CD4-positive, alpha-beta T cell (primary cell): ENCODE measurements at regions of chr16 and their contacts with region 1.

Region 1: DNA sequence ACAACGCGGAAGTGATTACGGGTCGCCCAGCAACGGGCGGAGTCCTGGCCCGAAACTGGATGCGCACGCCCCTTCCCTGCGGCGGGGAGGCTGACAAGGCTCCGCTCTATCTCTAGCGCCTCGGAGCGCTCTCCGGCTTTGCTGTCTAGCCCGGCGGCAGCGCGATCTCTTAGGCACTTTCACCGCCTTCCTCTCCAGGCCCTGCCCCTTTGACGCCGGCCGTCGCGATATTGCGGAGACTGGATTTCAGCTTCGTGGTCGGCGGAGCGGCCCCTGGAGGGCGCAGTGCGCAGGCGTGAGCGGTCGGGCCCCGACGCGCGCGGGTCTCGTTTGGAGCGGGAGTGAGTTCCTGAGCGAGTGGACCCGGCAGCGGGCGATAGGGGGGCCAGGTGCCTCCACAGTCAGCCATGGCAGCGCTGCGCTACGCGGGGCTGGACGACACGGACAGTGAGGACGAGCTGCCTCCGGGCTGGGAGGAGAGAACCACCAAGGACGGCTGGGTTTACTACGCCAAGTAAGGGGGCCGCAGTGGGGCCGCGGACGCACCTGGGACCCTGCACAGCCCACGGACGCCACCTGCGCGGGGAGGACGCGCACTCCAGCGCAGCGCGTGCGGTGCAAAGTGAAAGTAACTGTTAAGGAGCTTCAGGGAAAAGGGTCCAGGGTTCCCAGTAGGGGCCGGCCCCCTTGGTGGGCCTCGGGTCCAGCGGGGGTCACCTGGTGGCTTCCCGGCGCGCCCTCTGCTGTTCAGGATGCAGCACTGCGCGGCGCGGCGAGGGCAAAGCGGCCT is at the start of gene WWOX:
- DNase-seq: peak; percentile 91 to 99 (median 94)
- ATAC-seq: peak; percentile 96
- H3K4me3 ChIP-seq: peak within 1 kb of the TSS; percentile 91
- H3K4me3 Mint-ChIP-seq: peak within 1 kb of the TSS; percentile 94
- H3K27ac ChIP-seq: peak within 1 kb of the TSS; percentile 85 to 90
- H3K27ac Mint-ChIP-seq: peak within 1 kb of the TSS; percentile 83
- H3K4me1 ChIP-seq: peaks cover 29% of the 10 kb centered on the region
- H3K4me1 Mint-ChIP-seq: peaks cover 33% of the 10 kb centered on the region
- H3K27me3 ChIP-seq: no peaks in the 10 kb centered on the region
- H3K27me3 Mint-ChIP-seq: no peaks in the 10 kb centered on the region
- CTCF ChIP-seq: peak; percentile 98
- total RNA-seq, gene WWOX: 19.3 to 21.7 TPM

Region 2: DNA sequence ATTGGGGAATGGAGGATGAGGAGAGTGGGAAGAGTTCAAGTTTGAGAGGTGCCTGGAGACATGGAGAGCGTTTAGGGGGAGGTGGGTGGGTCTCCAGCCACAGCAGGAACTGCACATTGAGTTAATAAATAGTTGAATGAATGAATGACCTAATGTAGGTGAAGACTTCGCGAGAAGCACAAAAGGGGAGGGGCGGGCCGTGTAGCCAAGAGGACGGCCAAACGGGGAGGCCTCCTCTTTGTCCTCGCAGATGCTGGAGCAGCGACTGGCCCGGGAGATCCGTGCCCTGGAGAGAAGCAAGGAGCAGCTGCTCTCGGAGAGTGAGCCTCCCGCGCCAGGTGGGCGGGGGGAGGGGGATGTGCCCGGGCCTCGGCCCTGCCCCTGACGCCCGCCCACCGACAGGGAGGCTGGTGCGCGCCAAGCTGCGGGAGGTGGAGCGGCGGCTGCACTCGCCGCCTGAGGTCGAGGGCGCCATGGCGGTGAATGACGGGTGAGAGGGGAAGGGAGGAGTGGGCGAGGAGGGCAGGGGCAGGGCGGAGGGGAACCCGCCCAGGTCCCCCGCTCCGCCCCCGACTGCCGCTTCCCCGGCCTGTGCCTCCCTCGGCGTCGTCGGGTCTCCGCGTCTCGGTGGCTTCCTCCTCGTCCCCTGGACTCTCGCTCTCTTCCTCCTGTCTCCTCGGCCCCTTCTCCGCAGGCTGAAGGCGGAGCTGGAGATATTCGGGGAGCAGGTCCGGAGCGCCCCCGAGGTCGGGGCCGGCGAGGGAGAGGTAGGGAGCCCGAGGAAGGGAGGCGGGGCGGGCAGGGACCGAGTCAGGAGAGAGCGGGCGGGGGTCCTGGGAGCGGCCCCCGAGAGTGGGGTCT is 887.5 kb before region 1 on chr16:
- CTCF ChIA-PET with region 1: no interaction called
- POLR2A ChIA-PET with region 1: no interaction called
- intact Hi-C with region 1: loop called (anchors 10 kb)
- DNase-seq: peak; percentile 48 to 90 (median 72)
- ATAC-seq: peak; percentile 86
- H3K4me3 ChIP-seq: peak overlapping the region; percentile 85
- H3K4me3 Mint-ChIP-seq: peak overlapping the region; percentile 96
- H3K27ac ChIP-seq: peak overlapping the region; percentile 58 to 74
- H3K27ac Mint-ChIP-seq: peak overlapping the region; percentile 72
- H3K4me1 ChIP-seq: peaks cover 17% of the 10 kb centered on the region
- H3K4me1 Mint-ChIP-seq: peaks cover 16% of the 10 kb centered on the region
- H3K27me3 ChIP-seq: no peaks in the 10 kb centered on the region
- H3K27me3 Mint-ChIP-seq: no peaks in the 10 kb centered on the region
- CTCF ChIP-seq: no peak

Region 3: GRCh38 chr16:77675464-77676324 is 423.9 kb before region 1 on chr16:
- CTCF ChIA-PET with region 1: no interaction called
- POLR2A ChIA-PET with region 1: no interaction called
- intact Hi-C with region 1: loop called (anchors 1 kb)
- DNase-seq: peak; percentile 20 to 77 (median 46)
- ATAC-seq: peak; percentile 68
- H3K4me3 ChIP-seq: no peak overlapping the region
- H3K4me3 Mint-ChIP-seq: no peak overlapping the region
- H3K27ac ChIP-seq: no peak overlapping the region
- H3K27ac Mint-ChIP-seq: no peak overlapping the region
- H3K4me1 ChIP-seq: no peaks in the 10 kb centered on the region
- H3K4me1 Mint-ChIP-seq: no peaks in the 10 kb centered on the region
- H3K27me3 ChIP-seq: peaks cover 0 to 10% of the 10 kb centered on the region in 2 experiments
- H3K27me3 Mint-ChIP-seq: peaks cover 10% of the 10 kb centered on the region
- CTCF ChIP-seq: peak; percentile 92

Region 4: DNA sequence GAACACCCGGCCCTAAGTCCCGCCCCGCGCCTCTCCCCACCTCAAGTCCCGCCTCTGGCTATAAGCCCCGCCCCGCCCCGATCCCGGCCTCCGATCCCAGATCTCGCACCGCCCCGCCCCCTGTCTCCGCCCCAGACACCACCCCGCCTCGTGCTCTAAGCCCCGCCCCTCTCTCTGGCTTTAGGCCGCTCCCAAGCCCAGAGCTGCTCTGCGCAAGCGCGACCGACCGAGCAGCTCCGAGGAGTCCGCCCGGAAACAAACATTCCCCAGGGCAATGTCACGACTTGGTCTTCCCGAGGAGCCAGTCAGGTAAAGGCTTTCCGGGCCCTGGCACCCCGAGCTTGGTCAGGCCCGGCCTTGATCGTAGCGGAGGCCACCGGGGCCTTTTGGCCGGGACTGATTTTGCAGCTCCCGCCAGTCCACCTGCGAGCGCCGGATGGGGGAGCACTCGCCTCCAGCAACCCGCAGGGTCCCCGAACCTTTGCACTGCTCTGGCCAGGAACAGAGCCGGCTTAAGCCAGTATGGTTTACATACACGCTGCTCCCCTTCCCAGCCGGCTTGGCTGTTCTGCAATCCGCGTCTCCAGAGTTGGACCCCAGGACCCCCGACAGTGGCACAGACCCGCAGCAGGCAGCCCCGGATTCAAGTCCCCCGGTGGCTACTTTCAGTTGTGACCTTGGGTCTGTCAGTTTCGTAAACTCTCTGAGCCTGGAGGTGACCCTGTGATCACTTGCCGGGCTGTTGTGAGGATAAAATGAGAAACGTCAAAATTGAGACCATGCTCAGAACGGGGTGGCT is 377.1 kb before region 1 on chr16 and contains the start of gene NUDT7:
- CTCF ChIA-PET with region 1: no interaction called
- POLR2A ChIA-PET with region 1: interaction called, 4 read pairs
- intact Hi-C with region 1: loop called in 1 of 2 experiments (anchors 1 kb)
- DNase-seq: peak; percentile 85 to 100 (median 95)
- ATAC-seq: peak; percentile 93
- H3K4me3 ChIP-seq: peak within 1 kb of the TSS; percentile 95
- H3K4me3 Mint-ChIP-seq: peak within 1 kb of the TSS; percentile 94
- H3K27ac ChIP-seq: peak within 1 kb of the TSS; percentile 46 to 59
- H3K27ac Mint-ChIP-seq: peak within 1 kb of the TSS; percentile 87
- H3K4me1 ChIP-seq: peaks cover 19% of the 10 kb centered on the region
- H3K4me1 Mint-ChIP-seq: peaks cover 17% of the 10 kb centered on the region
- H3K27me3 ChIP-seq: no peaks in the 10 kb centered on the region
- H3K27me3 Mint-ChIP-seq: no peaks in the 10 kb centered on the region
- CTCF ChIP-seq: no peak
- total RNA-seq, gene NUDT7: 0.93 to 1.5 TPM

Region 5: GRCh38 chr16:78324649-78325285 is 225.2 kb after region 1 on chr16:
- CTCF ChIA-PET with region 1: no interaction called
- POLR2A ChIA-PET with region 1: no interaction called
- intact Hi-C with region 1: no loop called
- DNase-seq: no peak
- ATAC-seq: no peak
- H3K4me3 ChIP-seq: no peak overlapping the region
- H3K4me3 Mint-ChIP-seq: no peak overlapping the region
- H3K27ac ChIP-seq: no peak overlapping the region
- H3K27ac Mint-ChIP-seq: no peak overlapping the region
- H3K4me1 ChIP-seq: no peaks in the 10 kb centered on the region
- H3K4me1 Mint-ChIP-seq: no peaks in the 10 kb centered on the region
- H3K27me3 ChIP-seq: no peaks in the 10 kb centered on the region
- H3K27me3 Mint-ChIP-seq: no peaks in the 10 kb centered on the region
- CTCF ChIP-seq: no peak

Region 6: GRCh38 chr16:78353610-78354275 is 254.2 kb after region 1 on chr16:
- CTCF ChIA-PET with region 1: no interaction called
- POLR2A ChIA-PET with region 1: no interaction called
- intact Hi-C with region 1: no loop called
- DNase-seq: no peak
- ATAC-seq: no peak
- H3K4me3 ChIP-seq: no peak overlapping the region
- H3K4me3 Mint-ChIP-seq: no peak overlapping the region
- H3K27ac ChIP-seq: no peak overlapping the region
- H3K27ac Mint-ChIP-seq: no peak overlapping the region
- H3K4me1 ChIP-seq: no peaks in the 10 kb centered on the region
- H3K4me1 Mint-ChIP-seq: no peaks in the 10 kb centered on the region
- H3K27me3 ChIP-seq: no peaks in the 10 kb centered on the region
- H3K27me3 Mint-ChIP-seq: no peaks in the 10 kb centered on the region
- CTCF ChIP-seq: no peak

Region 7: GRCh38 chr16:79269211-79269863 is 1169.8 kb after region 1 on chr16:
- CTCF ChIA-PET with region 1: no interaction called
- POLR2A ChIA-PET with region 1: no interaction called
- intact Hi-C with region 1: loop called in 1 of 2 experiments (anchors 5 kb)
- DNase-seq: peak in 7 of 14 experiments; percentile 10 to 71 (median 47)
- ATAC-seq: peak; percentile 18
- H3K4me3 ChIP-seq: peak overlapping the region; percentile 13
- H3K4me3 Mint-ChIP-seq: peak overlapping the region; percentile 62
- H3K27ac ChIP-seq: peak overlapping the region in 1 of 2 donors; percentile 21
- H3K27ac Mint-ChIP-seq: peak overlapping the region; percentile 35
- H3K4me1 ChIP-seq: peaks cover 69% of the 10 kb centered on the region
- H3K4me1 Mint-ChIP-seq: peaks cover 72% of the 10 kb centered on the region
- H3K27me3 ChIP-seq: no peaks in the 10 kb centered on the region
- H3K27me3 Mint-ChIP-seq: peaks cover 43% of the 10 kb centered on the region
- CTCF ChIP-seq: no peak